Activated naive CD4-positive, alpha-beta T cell treated with anti-CD3 and anti-CD28 coated beads, Interleukin-2, amount 10 ng/mL, durations not matched to agents 7 days and 5 days (primary cell): ENCODE measurements at regions of chr17 and their contacts with region 1.

Region 1: DNA sequence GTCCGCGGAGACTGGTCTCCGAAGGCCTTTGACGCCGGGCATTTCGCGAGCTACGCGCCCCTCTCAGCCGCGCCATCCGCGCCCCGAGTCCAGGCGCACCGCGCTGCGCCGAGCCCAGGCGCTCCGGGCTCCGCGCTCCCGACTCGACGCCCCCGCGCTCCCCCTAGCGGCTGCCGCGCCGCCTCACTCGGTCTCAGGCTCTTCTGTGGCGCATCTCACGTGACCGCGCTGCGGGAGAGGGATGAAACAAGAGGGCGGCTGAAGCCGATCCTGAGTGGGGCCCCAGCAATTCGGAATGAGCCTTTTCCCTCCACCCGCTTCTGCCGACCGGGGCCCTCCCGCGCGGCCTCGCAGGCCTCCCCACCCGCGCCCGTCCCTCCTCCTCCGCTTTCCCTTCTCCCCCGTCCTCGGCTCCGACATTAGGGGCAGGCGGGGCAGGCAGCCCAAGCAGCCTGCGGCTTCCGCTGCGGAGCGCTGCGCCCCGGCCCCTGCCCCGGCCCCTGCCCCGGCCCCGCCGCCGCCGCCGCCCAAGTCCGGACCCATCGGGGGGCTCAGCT is 42.5 kb upstream of the AMZ2 start:
- DNase-seq: peak; percentile 93
- H3K4me3 Mint-ChIP-seq: peak overlapping the region; percentile 81
- H3K27ac Mint-ChIP-seq: peak overlapping the region; percentile 93
- H3K4me1 Mint-ChIP-seq: peaks cover 39% of the 10 kb centered on the region
- H3K27me3 Mint-ChIP-seq: peaks cover 51% of the 10 kb centered on the region

Region 2: GRCh38 chr17:67970815-67971214 is 234.5 kb before region 1 on chr17:
- CTCF ChIA-PET with region 1: no interaction called
- DNase-seq: no peak
- H3K4me3 Mint-ChIP-seq: no peak overlapping the region
- H3K27ac Mint-ChIP-seq: no peak overlapping the region
- H3K4me1 Mint-ChIP-seq: no peaks in the 10 kb centered on the region
- H3K27me3 Mint-ChIP-seq: no peaks in the 10 kb centered on the region

Region 3: GRCh38 chr17:68184816-68185436 is 20.4 kb before region 1 on chr17:
- CTCF ChIA-PET with region 1: interaction called, 104 read pairs
- DNase-seq: peak; percentile 78
- H3K4me3 Mint-ChIP-seq: peak overlapping the region; percentile 45
- H3K27ac Mint-ChIP-seq: peak overlapping the region; percentile 91
- H3K4me1 Mint-ChIP-seq: peaks cover 61% of the 10 kb centered on the region
- H3K27me3 Mint-ChIP-seq: peaks cover 14% of the 10 kb centered on the region